ENCODE measurements at regions of chrX and their contacts with region 1.

Region 1: DNA sequence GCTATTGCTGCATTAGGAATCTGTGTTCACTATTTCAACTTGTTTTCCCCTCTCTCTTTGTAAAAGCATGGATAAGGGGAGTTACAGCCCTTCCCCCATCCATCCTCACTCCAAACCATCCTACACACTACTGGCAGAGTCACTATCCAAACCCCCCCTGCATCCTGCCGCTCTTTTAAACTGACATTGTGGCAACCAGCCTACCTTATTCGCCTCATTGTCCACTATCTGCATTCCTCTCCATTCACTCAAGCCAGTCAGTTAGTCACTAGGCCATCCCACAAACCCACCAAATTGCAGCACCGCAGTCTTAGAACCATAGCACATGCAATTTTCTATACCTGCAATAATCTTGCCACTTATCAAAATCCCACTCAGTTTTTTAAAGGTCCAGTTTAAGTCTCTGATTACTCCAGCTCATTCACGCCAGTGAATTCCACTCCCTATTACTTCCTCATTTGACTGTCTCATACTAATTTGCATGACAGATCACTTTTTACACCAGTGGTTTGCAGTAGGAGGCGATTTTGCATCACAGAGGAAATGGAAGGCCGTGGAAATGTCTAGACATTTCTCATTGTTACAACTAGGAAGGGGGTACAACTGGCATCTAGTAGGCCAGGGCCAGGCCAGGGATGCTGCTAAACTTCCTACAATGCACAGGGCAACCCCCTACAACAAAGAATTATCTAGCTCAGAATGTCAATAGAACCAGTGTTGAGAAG is 181.8 kb downstream of the HS6ST2 start:
- DNase-seq: no peak
- H3K4me3 Mint-ChIP-seq: no peak overlapping the region
- H3K27ac Mint-ChIP-seq: no peak overlapping the region
- H3K4me1 Mint-ChIP-seq: peaks cover 19% of the 10 kb centered on the region
- H3K27me3 Mint-ChIP-seq: no peaks in the 10 kb centered on the region

Region 2: DNA sequence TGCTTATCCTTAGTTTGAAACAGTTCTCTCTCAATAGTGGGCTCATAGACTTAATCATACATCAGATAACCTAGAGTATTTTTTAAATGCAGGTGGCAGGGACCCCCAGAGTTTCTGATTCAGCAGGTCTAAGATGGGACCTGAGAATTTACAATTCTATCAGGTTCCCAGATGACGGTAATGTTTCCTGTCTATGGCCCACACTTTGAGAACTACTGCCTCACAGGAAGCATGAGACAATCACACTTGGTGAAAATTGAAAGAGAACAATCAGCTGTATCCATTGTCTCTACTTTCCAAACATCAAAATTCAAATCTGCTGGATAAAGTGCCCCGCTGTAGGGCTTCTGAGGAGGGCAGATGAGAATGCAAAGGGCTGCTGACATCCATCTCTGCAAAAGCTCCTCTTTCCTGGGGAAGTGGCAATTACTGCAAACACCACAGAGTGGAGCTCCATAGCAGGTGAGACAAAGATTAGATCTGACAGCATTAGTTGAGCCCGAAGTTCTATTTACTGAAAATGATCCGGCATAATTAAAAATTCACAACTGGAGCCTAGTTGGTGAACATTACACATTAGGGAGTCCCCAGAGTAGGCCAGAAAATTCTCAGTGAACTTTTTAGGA is 100.0 kb before region 1 on chrX:
- intact Hi-C with region 1: loop called (anchors 1 kb)
- DNase-seq: no peak
- H3K4me3 Mint-ChIP-seq: no peak overlapping the region
- H3K27ac Mint-ChIP-seq: no peak overlapping the region
- H3K4me1 Mint-ChIP-seq: peaks cover 4% of the 10 kb centered on the region
- H3K27me3 Mint-ChIP-seq: no peaks in the 10 kb centered on the region

Region 3: GRCh38 chrX:132692066-132692465 is 84.6 kb before region 1 on chrX:
- intact Hi-C with region 1: no loop called
- DNase-seq: no peak
- H3K4me3 Mint-ChIP-seq: no peak overlapping the region
- H3K27ac Mint-ChIP-seq: no peak overlapping the region
- H3K4me1 Mint-ChIP-seq: no peaks in the 10 kb centered on the region
- H3K27me3 Mint-ChIP-seq: peaks cover 7% of the 10 kb centered on the region

Region 4: DNA sequence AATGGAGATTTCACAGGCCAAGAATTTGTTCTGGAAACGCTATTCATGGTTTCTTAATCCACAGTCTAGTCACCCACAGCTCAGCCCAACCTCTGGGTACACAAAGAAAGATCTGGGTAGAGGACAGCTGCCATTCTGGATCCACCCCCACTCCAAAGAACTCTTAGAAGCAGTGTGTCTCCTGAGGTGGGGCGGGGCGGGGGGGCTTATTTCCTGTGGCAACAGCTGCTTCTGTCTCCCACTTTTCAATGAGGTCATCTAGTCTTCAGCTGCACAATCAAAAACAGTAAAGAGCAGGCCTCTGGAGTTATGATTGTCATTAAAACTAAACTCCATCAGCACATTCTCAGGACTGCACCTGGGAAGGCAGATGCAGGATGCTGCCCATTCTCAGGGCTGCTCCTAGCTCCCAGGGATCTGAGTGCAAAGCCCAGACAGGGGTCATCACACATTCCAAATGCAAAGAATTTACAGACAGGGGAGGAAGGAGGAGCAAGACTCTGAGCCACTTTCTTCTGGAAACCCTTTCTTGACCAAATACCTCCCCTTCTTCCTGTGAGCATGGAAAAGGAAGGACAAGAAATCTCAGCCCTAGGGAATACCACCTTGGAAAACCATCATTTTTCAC is 25.5 kb before region 1 on chrX:
- intact Hi-C with region 1: loop called (anchors 2 kb)
- DNase-seq: no peak
- H3K4me3 Mint-ChIP-seq: no peak overlapping the region
- H3K27ac Mint-ChIP-seq: no peak overlapping the region
- H3K4me1 Mint-ChIP-seq: peaks cover 17% of the 10 kb centered on the region
- H3K27me3 Mint-ChIP-seq: no peaks in the 10 kb centered on the region

Region 5: GRCh38 chrX:132957211-132958090 is 180.8 kb after region 1 on chrX:
- intact Hi-C with region 1: loop called (anchors 10 kb)
- DNase-seq: no peak
- H3K4me3 Mint-ChIP-seq: peak overlapping the region; percentile 79
- H3K27ac Mint-ChIP-seq: peak overlapping the region; percentile 40
- H3K4me1 Mint-ChIP-seq: no peaks in the 10 kb centered on the region
- H3K27me3 Mint-ChIP-seq: peaks cover 39% of the 10 kb centered on the region

Measured in activated T-helper 1 cell treated with anti-CD3 and anti-CD28 coated beads, Interleukin-12 subunit alpha, Interleukin-12 subunit beta, Interleukin-2, Interleukin-4 antibody, amounts not matched to agents 30 ng/mL and 10 ng/mL and 1 ng/mL, durations not matched to agents 14 hours and 24 hours and 36 hours (primary cell).